ENCODE measurements at regions of chr20 and their contacts with region 1.

Region 1: GRCh38 chr20:4401601-4402000 is 320.1 kb upstream of the PRND start:
- DNase-seq: no peak
- H3K4me3 ChIP-seq: no peak overlapping the region
- H3K27ac ChIP-seq: no peak overlapping the region
- H3K4me1 ChIP-seq: no peaks in the 10 kb centered on the region
- H3K27me3 ChIP-seq: no peaks in the 10 kb centered on the region
- CTCF ChIP-seq: no peak
- POLR2A ChIP-seq: no peak

Region 2: GRCh38 chr20:4483486-4483885 is 81.9 kb after region 1 on chr20:
- intact Hi-C with region 1: no loop called
- DNase-seq: no peak
- H3K4me3 ChIP-seq: no peak overlapping the region
- H3K27ac ChIP-seq: no peak overlapping the region
- H3K4me1 ChIP-seq: no peaks in the 10 kb centered on the region
- H3K27me3 ChIP-seq: no peaks in the 10 kb centered on the region
- CTCF ChIP-seq: no peak
- POLR2A ChIP-seq: no peak

Region 3: GRCh38 chr20:5270608-5271007 is 869.0 kb after region 1 on chr20:
- intact Hi-C with region 1: loop called (anchors 5 kb)
- DNase-seq: no peak
- H3K4me3 ChIP-seq: no peak overlapping the region
- H3K27ac ChIP-seq: no peak overlapping the region
- H3K4me1 ChIP-seq: no peaks in the 10 kb centered on the region
- H3K27me3 ChIP-seq: no peaks in the 10 kb centered on the region
- CTCF ChIP-seq: no peak
- POLR2A ChIP-seq: no peak

Measured in uterus (tissue), 4 donors.